ENCODE measurements at regions of chr11 and their contacts with region 1.

Region 1: GRCh38 chr11:3854977-3855807 is at the start of gene STIM1:
- DNase-seq: peak; percentile 82 to 94
- ATAC-seq: peak; percentile 86 to 91
- H3K4me3 ChIP-seq: peak within 1 kb of the TSS; percentile 98
- H3K27ac ChIP-seq: peak within 1 kb of the TSS; percentile 98 to 99
- H3K4me1 ChIP-seq: peaks cover 49% of the 10 kb centered on the region
- CTCF ChIP-seq: peak; percentile 91
- EP300 ChIP-seq: no peak
- POLR2A ChIP-seq: peak; percentile 69
- RAD21 ChIP-seq: peak; percentile 73 to 85
- polyA plus RNA-seq, gene STIM1: 38.7 and 42.5 TPM in 2 replicates

Region 2: DNA sequence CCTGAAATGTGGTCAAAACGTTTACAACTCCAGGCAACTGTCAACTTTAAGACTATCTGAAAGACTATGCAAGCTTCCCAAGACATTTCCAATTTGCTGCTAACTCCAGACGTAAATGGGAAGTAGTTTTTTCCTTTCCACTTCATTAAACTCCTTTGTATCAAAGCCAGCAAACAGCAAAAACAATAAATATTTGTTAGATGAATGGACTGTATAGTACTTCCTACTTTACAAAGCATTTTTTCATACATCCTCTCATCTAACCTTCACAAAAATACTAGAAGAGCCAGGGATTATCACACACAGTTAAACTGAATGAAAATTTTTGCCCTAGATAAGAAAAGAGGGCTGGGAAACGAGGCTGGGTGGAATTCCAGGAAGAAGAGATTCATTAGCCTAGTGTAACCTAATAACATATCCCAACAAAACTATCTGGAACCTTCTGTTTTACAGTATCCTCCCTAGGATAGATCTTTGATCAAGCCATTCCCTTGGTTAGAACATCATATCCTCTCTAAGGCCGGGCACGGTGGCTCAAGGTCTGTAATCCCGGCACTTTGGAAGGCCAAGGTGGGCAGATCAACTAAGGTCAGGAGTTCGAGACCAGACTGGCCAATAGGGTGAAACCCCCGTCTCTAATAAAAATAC is 68.3 kb before region 1 on chr11:
- CTCF ChIA-PET with region 1: no interaction called
- POLR2A ChIA-PET with region 1: no interaction called
- DNase-seq: no peak
- ATAC-seq: no peak; a peak in 1 of 6 replicates
- H3K4me3 ChIP-seq: no peak overlapping the region
- H3K27ac ChIP-seq: no peak overlapping the region
- H3K4me1 ChIP-seq: peaks cover 13% of the 10 kb centered on the region
- CTCF ChIP-seq: no peak
- EP300 ChIP-seq: no peak
- POLR2A ChIP-seq: no peak
- RAD21 ChIP-seq: no peak

Region 3: DNA sequence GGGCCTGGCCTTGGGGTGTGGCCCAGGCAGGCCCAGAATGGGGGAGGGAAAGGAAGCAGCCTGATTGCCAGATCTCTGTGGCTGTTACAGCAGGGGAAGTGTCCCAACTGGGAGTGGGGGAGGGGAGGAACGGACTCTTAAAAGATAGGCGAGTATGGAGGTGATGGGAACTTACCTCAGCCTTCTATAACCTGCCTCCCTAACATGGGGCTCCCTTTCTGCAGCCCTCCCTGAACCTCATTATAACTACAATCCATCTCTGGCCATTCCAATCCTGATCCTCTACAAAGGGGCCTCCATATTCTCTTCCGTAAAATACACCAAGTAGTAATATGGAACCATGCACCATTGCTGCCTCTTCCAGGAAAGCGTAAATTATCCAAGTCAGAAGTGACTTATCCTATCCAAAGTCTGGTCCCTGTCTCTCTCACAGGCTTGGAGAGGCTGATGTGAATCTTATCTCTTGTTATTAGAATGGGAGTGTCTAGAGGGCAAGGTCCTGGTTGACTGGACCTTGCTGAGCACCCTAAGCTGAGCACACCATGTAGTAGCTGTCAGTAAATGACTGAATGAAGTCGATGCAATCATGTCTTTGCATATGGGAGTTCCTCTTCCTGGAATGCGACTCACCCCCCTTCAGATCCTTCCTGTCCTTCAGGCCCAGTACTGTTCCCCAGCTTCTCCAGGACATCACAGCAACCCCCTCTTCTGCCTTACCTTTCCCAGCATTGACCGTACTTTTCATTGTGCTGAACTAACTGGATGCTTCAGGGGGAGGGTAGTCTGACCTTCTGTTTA is 20.3 kb before region 1 on chr11:
- CTCF ChIA-PET with region 1: interaction called, 115 read pairs
- POLR2A ChIA-PET with region 1: interaction called, 3 read pairs
- DNase-seq: no peak
- ATAC-seq: no peak
- H3K4me3 ChIP-seq: no peak overlapping the region
- H3K27ac ChIP-seq: no peak overlapping the region
- H3K4me1 ChIP-seq: peaks cover 38% of the 10 kb centered on the region
- CTCF ChIP-seq: no peak
- EP300 ChIP-seq: no peak
- POLR2A ChIP-seq: no peak
- RAD21 ChIP-seq: no peak

Region 4: DNA sequence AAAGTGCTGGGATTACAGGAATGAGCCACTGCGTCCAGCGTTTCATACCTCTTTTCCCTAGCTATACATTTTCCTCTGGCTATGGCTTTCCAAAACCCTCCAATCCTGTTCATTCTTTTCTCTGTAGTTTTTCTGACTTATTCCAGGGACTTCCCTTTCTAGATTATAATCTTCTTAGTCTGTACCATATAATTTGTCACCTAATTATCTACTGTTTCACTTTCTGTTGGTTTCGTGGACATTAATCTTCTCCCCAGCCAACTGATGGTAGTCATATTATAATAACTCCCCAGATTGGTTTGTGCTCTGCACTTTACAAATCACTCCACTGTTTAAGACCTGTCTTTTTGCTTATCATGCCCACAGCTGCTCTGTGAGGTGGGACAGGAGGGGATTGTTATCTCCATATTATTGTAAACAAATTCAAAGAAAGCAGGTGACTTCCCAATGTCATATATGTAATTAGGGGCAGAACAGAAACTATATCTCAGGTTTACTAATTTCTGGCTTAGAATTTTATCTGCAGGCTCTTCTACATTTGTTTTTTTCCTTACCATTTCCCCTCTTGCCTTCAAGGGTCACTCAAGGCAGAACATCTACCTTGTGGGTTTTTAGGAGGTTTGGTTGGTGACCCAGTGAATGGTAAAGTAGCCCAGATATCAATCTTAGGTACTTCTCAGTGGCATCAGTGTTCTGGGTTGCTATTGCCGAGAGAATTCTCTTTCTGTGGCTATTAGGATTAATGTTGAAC is 24.2 kb after region 1 on chr11:
- CTCF ChIA-PET with region 1: interaction called, 18 read pairs
- POLR2A ChIA-PET with region 1: interaction called, 4 read pairs
- DNase-seq: no peak
- ATAC-seq: peak; percentile 14 to 40; a peak in 1 of 6 replicates
- H3K4me3 ChIP-seq: no peak overlapping the region; the same call in 2 of the 3 replicates
- H3K27ac ChIP-seq: peak overlapping the region; percentile 68 to 83
- H3K4me1 ChIP-seq: peaks cover 39% of the 10 kb centered on the region
- CTCF ChIP-seq: no peak
- EP300 ChIP-seq: no peak
- POLR2A ChIP-seq: no peak
- RAD21 ChIP-seq: no peak

Region 5: DNA sequence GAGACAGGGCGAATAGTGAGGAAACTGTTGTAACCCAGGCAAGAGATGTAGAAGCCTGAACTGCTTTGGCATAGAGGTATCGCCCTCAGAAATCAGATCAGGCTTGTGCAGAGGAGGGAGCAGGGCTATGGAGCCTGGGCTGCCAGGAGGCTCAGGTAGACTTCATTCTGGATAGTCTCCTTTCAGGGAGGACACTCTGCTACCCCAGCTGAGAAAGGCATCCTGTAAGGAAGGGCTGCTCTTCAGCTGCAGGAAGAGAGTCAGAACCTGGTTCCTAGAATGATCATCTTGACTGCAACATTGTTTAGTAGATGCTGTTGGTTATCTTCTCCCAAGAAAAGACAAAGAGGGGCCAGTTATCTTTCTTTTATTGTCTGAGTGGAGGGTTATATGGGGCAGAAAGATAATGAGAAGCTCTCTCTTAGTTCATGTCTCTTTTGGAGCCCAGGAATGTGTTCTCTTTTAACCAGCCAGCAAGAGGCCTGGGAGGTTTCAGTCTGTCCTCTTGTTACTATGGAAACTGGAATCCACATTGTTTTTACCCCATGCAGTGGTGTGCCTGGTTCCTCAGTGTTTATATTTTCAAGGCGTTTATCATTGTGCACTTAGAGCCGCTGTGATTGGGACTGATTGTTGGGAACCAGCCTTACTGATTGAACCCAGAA is 95.9 kb after region 1 on chr11:
- CTCF ChIA-PET with region 1: interaction called, 10 read pairs
- POLR2A ChIA-PET with region 1: no interaction called
- DNase-seq: peak in 1 of 2 experiments; percentile 19
- ATAC-seq: peak; percentile 50 to 70; a peak in 4 of 6 replicates
- H3K4me3 ChIP-seq: no peak overlapping the region
- H3K27ac ChIP-seq: peak overlapping the region; percentile 41 to 63; a peak in 4 of 6 replicates
- H3K4me1 ChIP-seq: peaks cover 16% of the 10 kb centered on the region
- CTCF ChIP-seq: no peak
- EP300 ChIP-seq: no peak
- POLR2A ChIP-seq: no peak
- RAD21 ChIP-seq: no peak

Region 6: DNA sequence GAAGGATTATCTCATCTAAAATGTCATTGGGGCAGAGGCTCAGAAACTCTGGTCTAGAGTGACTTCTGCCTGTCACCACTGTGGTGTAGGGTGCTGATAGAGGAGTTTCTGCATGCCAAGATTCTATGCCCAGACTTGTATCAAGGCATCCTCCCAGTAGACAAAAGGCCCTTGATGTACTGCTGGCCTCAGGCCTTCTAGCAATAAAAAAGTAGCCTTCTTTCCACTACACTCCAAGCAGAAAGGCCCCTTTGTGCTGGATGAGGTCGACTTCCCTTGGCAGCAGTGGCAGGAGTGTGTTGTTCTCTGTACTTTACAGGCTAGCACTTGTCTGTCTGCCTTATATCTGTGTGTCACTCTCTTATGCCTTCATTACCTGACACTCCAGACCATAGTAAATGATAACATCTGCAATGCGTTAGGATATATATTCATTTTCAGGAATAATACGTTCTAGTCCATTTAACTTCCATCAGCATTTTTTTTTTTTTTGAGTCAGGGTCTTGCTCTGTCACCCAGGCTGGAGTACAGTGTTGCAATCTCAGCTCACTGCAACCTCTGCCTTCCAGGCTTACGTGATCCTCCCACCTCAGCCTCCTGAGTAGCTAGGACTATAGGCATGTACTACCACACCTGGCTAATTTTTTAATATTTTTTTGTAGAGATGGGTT is 189.9 kb after region 1 on chr11:
- CTCF ChIA-PET with region 1: interaction called, 27 read pairs
- POLR2A ChIA-PET with region 1: interaction called, 3 read pairs
- DNase-seq: no peak
- ATAC-seq: peak; percentile 32 to 42; a peak in 3 of 6 replicates
- H3K4me3 ChIP-seq: no peak overlapping the region
- H3K27ac ChIP-seq: no peak overlapping the region
- H3K4me1 ChIP-seq: peaks cover 8% of the 10 kb centered on the region; the same call in 2 of the 3 replicates
- CTCF ChIP-seq: no peak
- EP300 ChIP-seq: no peak
- POLR2A ChIP-seq: no peak
- RAD21 ChIP-seq: no peak

Region 7: GRCh38 chr11:4087551-4087950 is 232.4 kb after region 1 on chr11:
- CTCF ChIA-PET with region 1: interaction called, 36 read pairs
- POLR2A ChIA-PET with region 1: no interaction called
- DNase-seq: peak in 1 of 2 experiments; percentile 11
- ATAC-seq: peak in 1 of 2 experiments; percentile 55; a peak in 3 of 6 replicates
- H3K4me3 ChIP-seq: no peak overlapping the region
- H3K27ac ChIP-seq: no peak overlapping the region
- H3K4me1 ChIP-seq: no peaks in the 10 kb centered on the region
- CTCF ChIP-seq: no peak
- EP300 ChIP-seq: no peak
- POLR2A ChIP-seq: no peak
- RAD21 ChIP-seq: no peak